ENCODE measurements at regions of chr15 and their contacts with region 1.

Region 1: DNA sequence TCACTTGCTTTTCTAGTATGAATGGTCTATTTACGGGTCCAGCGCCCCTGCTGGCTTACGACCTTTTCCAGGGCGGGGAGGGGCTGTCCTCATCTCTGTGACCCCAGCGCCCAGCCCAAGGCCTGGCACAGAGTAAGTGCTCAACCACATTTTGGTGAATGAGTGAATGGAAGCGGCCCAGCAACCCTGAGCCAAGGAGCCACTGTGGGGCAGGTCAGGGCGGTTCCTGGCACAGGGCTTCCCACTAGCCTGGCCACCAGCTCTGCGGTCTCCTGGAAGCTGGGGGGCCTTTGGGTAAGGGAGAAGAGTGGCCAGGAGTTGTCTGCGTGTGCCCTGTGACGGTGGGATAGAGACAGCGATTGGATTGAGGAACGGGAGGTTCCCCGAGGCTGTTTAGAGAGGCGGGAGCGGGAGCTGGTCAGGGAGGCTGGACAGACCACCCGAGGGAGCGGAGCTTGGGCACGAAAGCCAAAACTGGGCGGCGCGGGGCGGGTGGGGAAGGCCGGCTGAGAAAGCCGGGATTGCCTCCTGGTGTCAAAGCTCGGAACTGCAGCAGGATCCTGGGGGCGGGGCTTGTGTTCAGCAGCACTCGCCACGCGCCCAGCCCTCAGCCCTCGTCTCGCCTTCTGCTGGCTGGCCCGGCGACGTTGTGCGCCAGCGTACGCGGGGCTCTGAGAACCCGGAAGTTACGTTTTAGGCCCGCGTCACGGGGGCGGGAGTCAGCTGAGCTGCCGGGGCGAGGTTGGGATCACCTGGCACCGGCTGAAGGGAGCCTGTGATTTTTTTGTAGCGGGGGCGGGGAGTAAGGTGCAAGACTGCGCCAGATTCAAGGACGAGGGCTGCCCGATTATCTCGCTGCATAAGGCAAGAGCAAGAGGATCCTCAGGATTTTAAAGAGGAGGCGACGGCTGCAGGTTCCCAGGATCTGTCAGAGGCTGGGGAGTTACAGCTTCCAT is at the start of gene VPS18:
- DNase-seq: peak; percentile 97 to 98
- H3K4me3 ChIP-seq: peak within 1 kb of the TSS; percentile 87
- H3K4me3 Mint-ChIP-seq: peak within 1 kb of the TSS; percentile 88
- H3K27ac Mint-ChIP-seq: peak within 1 kb of the TSS; percentile 87
- H3K4me1 ChIP-seq: peaks cover 14% of the 10 kb centered on the region
- H3K4me1 Mint-ChIP-seq: peaks cover 23% of the 10 kb centered on the region
- H3K27me3 ChIP-seq: no peaks in the 10 kb centered on the region
- H3K27me3 Mint-ChIP-seq: no peaks in the 10 kb centered on the region
- CTCF ChIP-seq: peak; percentile 84 to 85
- total RNA-seq, gene VPS18: 27.3 and 29.3 TPM in 2 replicates

Region 2: DNA sequence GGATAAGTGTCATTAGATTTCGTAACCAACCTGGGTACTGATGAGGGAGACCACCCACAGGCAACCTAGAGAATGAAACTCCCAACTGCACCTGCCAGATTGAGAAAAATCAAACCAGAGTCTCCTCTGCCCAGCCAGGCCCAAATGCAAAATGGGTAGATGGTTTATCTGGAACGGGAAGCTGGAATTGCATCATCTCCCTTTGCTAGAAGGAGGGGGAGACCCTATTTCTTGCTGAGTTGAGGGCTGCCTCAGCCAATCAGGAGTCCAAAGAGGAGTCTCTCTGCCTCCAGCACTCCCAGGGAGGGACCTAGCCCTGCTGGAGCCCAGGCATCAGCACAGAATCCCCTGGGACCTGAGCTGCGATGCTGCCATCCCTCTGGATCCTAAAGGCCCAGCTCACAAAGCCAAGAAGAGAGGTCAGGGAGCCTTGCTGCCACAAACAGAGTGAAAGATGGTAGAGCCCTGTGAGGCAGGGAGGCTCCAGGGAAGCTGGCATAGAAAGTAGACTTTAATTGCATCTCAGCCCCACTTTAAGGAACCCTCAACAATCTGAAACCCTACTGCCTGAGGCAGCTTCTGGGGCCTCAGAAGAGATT is 147.0 kb before region 1 on chr15:
- CTCF ChIA-PET with region 1: interaction called, 23 read pairs
- POLR2A ChIA-PET with region 1: interaction called, 4 read pairs
- intact Hi-C with region 1: loop called (anchors 1 kb)
- DNase-seq: no peak
- H3K4me3 ChIP-seq: no peak overlapping the region
- H3K4me3 Mint-ChIP-seq: no peak overlapping the region
- H3K27ac Mint-ChIP-seq: peak overlapping the region; percentile 42
- H3K4me1 ChIP-seq: peaks cover 15% of the 10 kb centered on the region
- H3K4me1 Mint-ChIP-seq: peaks cover 12% of the 10 kb centered on the region
- H3K27me3 ChIP-seq: no peaks in the 10 kb centered on the region
- H3K27me3 Mint-ChIP-seq: no peaks in the 10 kb centered on the region
- CTCF ChIP-seq: no peak

Region 3: DNA sequence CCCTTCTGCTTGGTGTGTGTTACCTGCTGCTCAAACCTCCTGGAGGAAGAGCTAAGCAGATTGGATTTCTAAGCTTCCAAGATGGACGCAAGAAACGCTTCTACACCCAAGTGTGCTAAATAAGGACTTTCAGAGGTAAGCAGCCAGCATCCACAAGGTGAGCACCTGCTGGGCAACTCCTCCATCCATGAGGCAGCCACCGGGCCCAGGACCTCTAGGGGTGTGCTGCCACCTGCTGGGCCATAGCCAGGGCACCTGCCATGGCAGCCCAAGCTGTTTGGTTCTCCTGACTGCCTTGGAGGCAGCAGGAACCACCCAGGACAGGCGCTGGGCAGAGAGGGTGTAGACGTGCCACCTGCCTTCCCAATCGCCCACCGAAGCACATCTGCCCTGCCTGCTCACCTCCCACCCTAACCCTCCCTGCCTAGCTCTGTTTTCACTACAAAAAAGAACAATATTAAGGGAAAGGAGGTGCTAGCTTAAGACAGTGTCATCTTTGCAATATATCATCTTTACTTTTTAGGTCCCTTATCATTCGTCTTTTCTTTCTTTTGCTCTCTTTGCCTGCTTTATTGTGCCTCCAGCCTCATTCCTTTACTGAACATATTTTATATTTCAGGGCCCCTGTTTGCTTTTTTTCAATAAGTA is 111.3 kb before region 1 on chr15:
- CTCF ChIA-PET with region 1: interaction called, 13 read pairs
- POLR2A ChIA-PET with region 1: no interaction called
- intact Hi-C with region 1: loop called (anchors 5 kb)
- DNase-seq: peak; percentile 76 to 88
- H3K4me3 ChIP-seq: no peak overlapping the region
- H3K4me3 Mint-ChIP-seq: no peak overlapping the region
- H3K27ac Mint-ChIP-seq: no peak overlapping the region
- H3K4me1 ChIP-seq: peaks cover 8% of the 10 kb centered on the region
- H3K4me1 Mint-ChIP-seq: peaks cover 8% of the 10 kb centered on the region
- H3K27me3 ChIP-seq: no peaks in the 10 kb centered on the region
- H3K27me3 Mint-ChIP-seq: no peaks in the 10 kb centered on the region
- CTCF ChIP-seq: peak; percentile 81 to 89

Region 4: DNA sequence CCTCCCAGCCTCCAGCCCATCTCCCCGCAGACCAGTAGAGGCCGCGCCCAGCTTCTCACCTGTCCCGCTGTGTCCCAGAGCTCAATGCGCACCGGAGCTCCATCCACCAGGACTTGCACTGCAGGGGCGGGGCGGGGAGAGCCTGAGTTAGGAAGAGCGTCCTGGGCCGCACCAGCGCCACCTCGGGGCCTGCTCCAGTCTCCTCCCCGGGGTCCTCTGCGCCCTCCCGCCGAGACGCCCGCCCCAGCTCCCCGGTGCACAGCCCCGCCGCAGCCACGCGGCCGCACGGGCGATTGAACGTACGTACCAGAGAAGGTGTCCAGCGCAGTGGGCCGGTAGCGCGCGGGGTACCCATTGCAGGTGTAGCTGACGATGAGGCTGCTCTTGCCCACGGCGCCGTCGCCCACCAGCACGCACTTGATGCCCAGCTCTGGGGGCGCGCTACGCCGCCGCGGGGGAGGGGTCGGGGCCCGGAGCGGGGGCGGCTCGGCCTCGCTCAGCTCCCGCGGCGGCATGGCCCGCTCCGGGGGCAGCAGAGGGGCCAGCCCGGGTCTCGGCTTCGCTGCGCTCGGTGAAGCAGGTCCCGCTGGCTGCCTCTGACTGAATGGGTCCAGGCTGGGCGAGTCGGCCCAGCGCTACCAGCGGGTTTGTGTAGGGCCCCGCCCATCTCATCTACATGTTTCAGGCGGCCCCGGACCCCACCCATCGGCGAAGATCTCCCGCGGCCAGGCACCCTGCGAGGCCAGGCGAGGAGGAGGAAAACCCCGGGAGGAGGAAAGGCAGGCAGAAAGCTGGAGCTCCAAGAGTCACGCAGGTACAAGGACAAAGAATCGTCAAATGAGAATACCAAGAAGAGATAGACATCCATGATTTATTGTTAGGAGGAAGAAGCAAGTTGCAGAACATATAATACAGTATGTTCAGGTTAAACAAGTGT is 20.1 kb before region 1 on chr15 and contains the start of gene RHOV:
- CTCF ChIA-PET with region 1: interaction called, 36 read pairs
- POLR2A ChIA-PET with region 1: interaction called, 13 read pairs
- intact Hi-C with region 1: loop called (anchors 1 kb)
- DNase-seq: peak; percentile 90 to 92
- H3K4me3 ChIP-seq: peak within 1 kb of the TSS; percentile 88
- H3K4me3 Mint-ChIP-seq: peak within 1 kb of the TSS; percentile 68
- H3K27ac Mint-ChIP-seq: peak within 1 kb of the TSS; percentile 64
- H3K4me1 ChIP-seq: peaks cover 15% of the 10 kb centered on the region
- H3K4me1 Mint-ChIP-seq: peaks cover 8% of the 10 kb centered on the region
- H3K27me3 ChIP-seq: no peaks in the 10 kb centered on the region
- H3K27me3 Mint-ChIP-seq: no peaks in the 10 kb centered on the region
- CTCF ChIP-seq: peak in 1 of 2 experiments; percentile 59
- total RNA-seq, gene RHOV: 3.2 and 4.4 TPM in 2 replicates

Region 5: DNA sequence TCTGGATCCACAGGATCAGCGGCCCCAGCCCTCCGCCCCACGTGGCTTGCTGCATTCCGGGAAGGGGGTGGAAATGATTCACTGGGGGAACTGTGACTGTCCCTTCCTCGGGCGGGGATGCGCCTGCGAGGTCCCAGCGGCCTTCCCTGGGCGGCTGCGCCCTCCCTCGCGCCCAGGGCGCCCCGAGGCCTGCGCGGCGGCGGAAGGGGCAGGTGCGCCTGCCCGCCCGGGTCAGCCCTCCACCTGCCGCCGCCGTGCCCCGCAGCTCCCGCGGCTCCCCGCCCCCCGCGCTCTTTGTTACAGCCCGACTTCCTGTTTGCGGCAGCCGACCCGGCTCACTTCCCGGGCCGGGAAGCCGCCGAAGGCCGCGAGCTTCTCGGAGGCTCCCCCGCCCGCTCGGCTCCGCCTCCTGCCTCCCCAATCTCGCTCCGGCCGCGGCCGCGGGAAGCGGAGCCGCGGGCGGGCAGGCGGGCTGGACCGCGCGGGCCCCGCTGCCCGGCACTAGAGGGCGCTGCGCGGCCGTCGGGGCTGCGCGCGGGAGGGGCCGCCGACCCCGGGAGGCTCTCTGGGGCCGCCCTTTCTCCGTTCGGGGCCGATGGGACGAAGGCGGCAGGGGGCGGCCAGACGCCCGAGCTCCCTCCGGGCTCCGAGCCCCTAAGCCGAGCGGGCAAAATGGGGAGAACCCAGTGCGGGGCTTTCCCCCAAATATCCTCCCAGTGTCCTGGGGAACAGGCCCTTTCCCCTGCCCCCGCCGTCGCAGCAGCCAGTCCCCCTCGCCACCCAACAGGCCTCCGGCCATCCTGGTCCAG is 47.7 kb after region 1 on chr15:
- CTCF ChIA-PET with region 1: interaction called, 13 read pairs
- POLR2A ChIA-PET with region 1: no interaction called
- intact Hi-C with region 1: no loop called
- DNase-seq: peak; percentile 86 to 90
- H3K4me3 ChIP-seq: peak overlapping the region; percentile 56
- H3K4me3 Mint-ChIP-seq: peak overlapping the region; percentile 79
- H3K27ac Mint-ChIP-seq: peak overlapping the region; percentile 95
- H3K4me1 ChIP-seq: peaks cover 12% of the 10 kb centered on the region
- H3K4me1 Mint-ChIP-seq: no peaks in the 10 kb centered on the region
- H3K27me3 ChIP-seq: no peaks in the 10 kb centered on the region
- H3K27me3 Mint-ChIP-seq: no peaks in the 10 kb centered on the region
- CTCF ChIP-seq: peak; percentile 16 to 60

Region 6: DNA sequence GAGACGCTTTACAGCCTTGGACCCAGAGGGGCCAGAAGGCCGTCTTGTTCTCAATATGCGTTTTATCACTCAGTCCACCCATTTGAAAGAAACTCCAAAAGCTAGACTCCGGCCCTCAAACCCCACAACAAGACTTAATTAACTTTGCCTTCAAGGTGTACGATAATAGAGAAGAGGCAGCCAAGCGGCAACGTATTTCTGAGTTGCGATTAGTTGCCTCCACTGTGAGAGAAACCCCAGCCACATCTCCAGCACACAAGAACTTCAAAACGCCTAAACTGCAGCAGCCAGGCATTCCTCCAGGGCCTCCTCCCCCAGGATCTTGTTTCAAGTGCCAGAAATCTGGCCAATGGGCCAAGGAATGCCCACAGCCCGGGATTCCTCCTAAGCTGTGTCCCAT is 239.4 kb after region 1 on chr15:
- CTCF ChIA-PET with region 1: no interaction called
- POLR2A ChIA-PET with region 1: no interaction called
- intact Hi-C with region 1: no loop called
- DNase-seq: no peak
- H3K4me3 ChIP-seq: no peak overlapping the region
- H3K4me3 Mint-ChIP-seq: no peak overlapping the region
- H3K27ac Mint-ChIP-seq: no peak overlapping the region
- H3K4me1 ChIP-seq: peaks cover 5% of the 10 kb centered on the region
- H3K4me1 Mint-ChIP-seq: peaks cover 3% of the 10 kb centered on the region
- H3K27me3 ChIP-seq: no peaks in the 10 kb centered on the region
- H3K27me3 Mint-ChIP-seq: no peaks in the 10 kb centered on the region
- CTCF ChIP-seq: no peak

Region 7: GRCh38 chr15:41263891-41264351 is 369.9 kb after region 1 on chr15:
- CTCF ChIA-PET with region 1: no interaction called
- POLR2A ChIA-PET with region 1: no interaction called
- intact Hi-C with region 1: no loop called
- DNase-seq: peak; percentile 50 to 53
- H3K4me3 ChIP-seq: no peak overlapping the region
- H3K4me3 Mint-ChIP-seq: peak overlapping the region; percentile 29
- H3K27ac Mint-ChIP-seq: peak overlapping the region; percentile 80
- H3K4me1 ChIP-seq: peaks cover 28% of the 10 kb centered on the region
- H3K4me1 Mint-ChIP-seq: peaks cover 12% of the 10 kb centered on the region
- H3K27me3 ChIP-seq: no peaks in the 10 kb centered on the region
- H3K27me3 Mint-ChIP-seq: no peaks in the 10 kb centered on the region
- CTCF ChIP-seq: no peak

Measured in Caco-2 (cell line).